OCI-LY7 (cell line): ENCODE measurements at regions of chr12 and their contacts with region 1.

Region 1: DNA sequence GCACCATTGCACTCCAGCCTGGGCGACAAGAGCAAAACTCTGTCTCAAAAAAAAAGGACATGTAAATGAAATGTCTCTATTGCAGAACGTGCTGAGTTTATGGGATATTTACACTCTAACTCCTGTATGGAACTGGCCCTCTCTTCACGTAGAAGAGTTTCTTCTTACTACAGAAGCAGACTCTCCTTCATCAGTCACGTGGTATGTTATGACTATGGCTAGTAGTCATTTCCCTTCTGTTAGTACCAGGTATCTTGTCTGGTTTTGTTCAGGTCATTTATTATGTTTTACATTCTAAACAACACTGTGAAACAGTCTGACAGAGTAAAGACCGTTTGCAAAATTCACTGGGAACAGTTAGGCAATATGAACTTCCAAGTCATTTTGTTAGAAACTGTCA is 20.3 kb downstream of the KNTC1 start:
- DNase-seq: no peak
- H3K4me3 ChIP-seq: no peak overlapping the region
- H3K27ac ChIP-seq: no peak overlapping the region
- H3K4me1 ChIP-seq: peaks cover 20% of the 10 kb centered on the region
- CTCF ChIP-seq: no peak

Region 2: DNA sequence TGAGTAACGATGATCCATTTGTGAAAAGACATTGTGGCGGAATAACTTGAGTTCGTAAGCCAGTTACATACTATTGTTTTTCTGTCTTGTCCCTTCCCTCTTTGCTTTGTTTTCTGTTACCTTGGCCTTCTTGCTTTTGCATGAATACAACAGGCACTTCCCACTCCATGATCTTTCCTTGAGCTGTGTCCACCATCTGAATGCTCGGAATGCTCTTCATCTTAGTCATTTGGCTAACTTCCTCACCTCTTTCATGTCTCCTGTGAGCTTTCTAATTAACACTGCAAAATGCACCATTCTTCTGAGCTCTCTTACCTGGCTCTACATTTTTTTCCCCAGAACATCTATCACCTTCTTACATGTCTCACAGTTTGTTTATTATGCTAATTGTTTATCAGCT is 10.3 kb before region 1 on chr12:
- CTCF ChIA-PET with region 1: no interaction called
- POLR2A ChIA-PET with region 1: interaction called, 25 read pairs
- intact Hi-C with region 1: no loop called
- DNase-seq: no peak
- H3K4me3 ChIP-seq: no peak overlapping the region
- H3K27ac ChIP-seq: no peak overlapping the region
- H3K4me1 ChIP-seq: no peaks in the 10 kb centered on the region
- CTCF ChIP-seq: no peak

Region 3: DNA sequence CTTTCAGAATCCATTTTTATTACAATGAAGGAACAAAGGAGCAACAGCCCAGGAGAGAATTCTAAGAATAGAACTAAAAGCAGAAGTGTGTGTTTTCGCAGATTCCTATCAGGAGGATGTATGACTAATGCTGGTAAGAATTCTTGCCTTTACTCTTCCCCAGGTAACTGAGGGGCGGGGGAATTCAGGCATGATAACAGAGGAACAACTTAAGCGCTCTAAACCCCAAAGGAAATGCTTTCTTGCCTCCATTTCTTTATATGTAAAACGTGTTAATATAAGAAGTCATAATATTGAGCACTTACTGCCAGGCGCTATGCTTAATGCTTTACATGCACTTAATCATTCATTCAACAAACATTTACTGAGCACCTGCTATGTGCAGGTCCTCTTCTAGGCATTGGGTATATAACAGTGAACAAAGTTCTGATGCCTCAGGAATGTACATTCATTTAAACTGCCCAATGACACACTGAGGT is 178.8 kb after region 1 on chr12:
- CTCF ChIA-PET with region 1: no interaction called
- POLR2A ChIA-PET with region 1: no interaction called
- intact Hi-C with region 1: no loop called
- DNase-seq: no peak
- H3K4me3 ChIP-seq: no peak overlapping the region
- H3K27ac ChIP-seq: no peak overlapping the region
- H3K4me1 ChIP-seq: peaks cover 28% of the 10 kb centered on the region
- CTCF ChIP-seq: no peak